ENCODE measurements at regions of chr1 and their contacts with region 1.

Region 1: GRCh38 chr1:20151906-20152598 is 12.9 kb downstream of the PLA2G2F start:
- DNase-seq: peak; percentile 74
- ATAC-seq: peak; percentile 98
- H3K4me3 Mint-ChIP-seq: peak overlapping the region; percentile 80
- H3K27ac Mint-ChIP-seq: no peak overlapping the region
- H3K4me1 Mint-ChIP-seq: peaks cover 9% of the 10 kb centered on the region
- H3K27me3 Mint-ChIP-seq: no peaks in the 10 kb centered on the region
- CTCF ChIP-seq: peak; percentile 65

Region 2: DNA sequence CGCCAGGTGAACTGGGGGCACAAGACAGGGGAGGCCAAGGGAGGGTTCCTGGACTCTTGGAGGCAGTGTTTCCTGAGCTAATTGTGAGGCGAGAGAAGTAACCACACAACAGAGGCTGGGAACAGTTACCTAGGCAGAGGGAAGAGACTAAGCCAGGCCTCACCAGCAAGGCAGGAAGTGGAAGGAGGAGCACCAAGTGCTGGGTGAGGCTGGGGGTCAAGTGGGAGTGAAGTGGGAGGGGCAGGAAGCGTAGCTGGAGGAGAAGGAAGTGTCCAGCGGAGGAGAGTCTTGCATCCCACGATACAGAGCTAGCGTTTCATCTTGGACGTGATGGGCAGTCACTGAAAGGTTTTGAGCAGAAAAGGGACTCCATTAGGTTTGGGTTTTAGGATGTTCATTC is 618.4 kb before region 1 on chr1:
- CTCF ChIA-PET with region 1: no interaction called
- POLR2A ChIA-PET with region 1: no interaction called
- intact Hi-C with region 1: no loop called
- DNase-seq: no peak
- ATAC-seq: no peak
- H3K4me3 Mint-ChIP-seq: no peak overlapping the region
- H3K27ac Mint-ChIP-seq: no peak overlapping the region
- H3K4me1 Mint-ChIP-seq: no peaks in the 10 kb centered on the region
- H3K27me3 Mint-ChIP-seq: no peaks in the 10 kb centered on the region
- CTCF ChIP-seq: no peak

Region 3: GRCh38 chr1:19882111-19883071 is 269.7 kb before region 1 on chr1 and contains the start of gene OTUD3:
- CTCF ChIA-PET with region 1: no interaction called
- POLR2A ChIA-PET with region 1: no interaction called
- intact Hi-C with region 1: loop called (anchors 1 kb)
- DNase-seq: peak; percentile 90
- ATAC-seq: peak; percentile 96
- H3K4me3 Mint-ChIP-seq: peak within 1 kb of the TSS; percentile 87
- H3K27ac Mint-ChIP-seq: peak within 1 kb of the TSS; percentile 84
- H3K4me1 Mint-ChIP-seq: peaks cover 30% of the 10 kb centered on the region
- H3K27me3 Mint-ChIP-seq: peaks cover 5% of the 10 kb centered on the region
- CTCF ChIP-seq: peak; percentile 64
- total RNA-seq, gene OTUD3: 13.2 and 14.2 TPM in 2 replicates

Region 4: GRCh38 chr1:19974822-19975416 is 177.1 kb before region 1 on chr1:
- CTCF ChIA-PET with region 1: interaction called, 33 read pairs
- POLR2A ChIA-PET with region 1: interaction called, 5 read pairs
- intact Hi-C with region 1: loop called (anchors 1 kb)
- DNase-seq: no peak
- ATAC-seq: peak; percentile 50
- H3K4me3 Mint-ChIP-seq: no peak overlapping the region
- H3K27ac Mint-ChIP-seq: no peak overlapping the region
- H3K4me1 Mint-ChIP-seq: peaks cover 3% of the 10 kb centered on the region
- H3K27me3 Mint-ChIP-seq: peaks cover 16% of the 10 kb centered on the region
- CTCF ChIP-seq: no peak

Region 5: GRCh38 chr1:20100632-20101355 is 51.3 kb before region 1 on chr1:
- CTCF ChIA-PET with region 1: interaction called, 54 read pairs
- POLR2A ChIA-PET with region 1: no interaction called
- intact Hi-C with region 1: loop called (anchors 1 kb)
- DNase-seq: peak; percentile 29
- ATAC-seq: peak; percentile 92
- H3K4me3 Mint-ChIP-seq: no peak overlapping the region
- H3K27ac Mint-ChIP-seq: no peak overlapping the region
- H3K4me1 Mint-ChIP-seq: peaks cover 6% of the 10 kb centered on the region
- H3K27me3 Mint-ChIP-seq: no peaks in the 10 kb centered on the region
- CTCF ChIP-seq: no peak

Region 6: DNA sequence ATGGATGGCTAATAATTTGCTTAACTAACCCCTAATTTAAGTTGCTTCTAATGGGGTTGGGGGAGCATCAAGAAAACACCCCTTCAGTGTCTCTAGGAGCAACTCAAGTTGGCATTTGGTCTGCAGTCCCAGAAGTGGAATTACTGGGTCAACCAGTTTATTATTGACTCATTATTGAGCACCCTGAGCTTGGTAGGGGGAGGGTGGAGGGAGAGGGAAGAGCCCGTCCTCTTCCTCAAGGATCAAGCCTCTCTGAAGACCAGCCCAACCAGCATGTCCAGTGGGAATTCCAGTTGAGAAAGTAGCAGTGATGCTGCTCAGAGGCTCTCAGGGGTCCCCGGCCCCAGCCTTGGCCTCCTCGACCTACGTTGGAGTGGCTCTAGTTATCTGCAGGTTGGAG is 15.0 kb before region 1 on chr1:
- CTCF ChIA-PET with region 1: no interaction called
- POLR2A ChIA-PET with region 1: no interaction called
- intact Hi-C with region 1: no loop called
- DNase-seq: no peak
- ATAC-seq: no peak
- H3K4me3 Mint-ChIP-seq: no peak overlapping the region
- H3K27ac Mint-ChIP-seq: no peak overlapping the region
- H3K4me1 Mint-ChIP-seq: no peaks in the 10 kb centered on the region
- H3K27me3 Mint-ChIP-seq: peaks cover 6% of the 10 kb centered on the region
- CTCF ChIP-seq: no peak

Region 7: DNA sequence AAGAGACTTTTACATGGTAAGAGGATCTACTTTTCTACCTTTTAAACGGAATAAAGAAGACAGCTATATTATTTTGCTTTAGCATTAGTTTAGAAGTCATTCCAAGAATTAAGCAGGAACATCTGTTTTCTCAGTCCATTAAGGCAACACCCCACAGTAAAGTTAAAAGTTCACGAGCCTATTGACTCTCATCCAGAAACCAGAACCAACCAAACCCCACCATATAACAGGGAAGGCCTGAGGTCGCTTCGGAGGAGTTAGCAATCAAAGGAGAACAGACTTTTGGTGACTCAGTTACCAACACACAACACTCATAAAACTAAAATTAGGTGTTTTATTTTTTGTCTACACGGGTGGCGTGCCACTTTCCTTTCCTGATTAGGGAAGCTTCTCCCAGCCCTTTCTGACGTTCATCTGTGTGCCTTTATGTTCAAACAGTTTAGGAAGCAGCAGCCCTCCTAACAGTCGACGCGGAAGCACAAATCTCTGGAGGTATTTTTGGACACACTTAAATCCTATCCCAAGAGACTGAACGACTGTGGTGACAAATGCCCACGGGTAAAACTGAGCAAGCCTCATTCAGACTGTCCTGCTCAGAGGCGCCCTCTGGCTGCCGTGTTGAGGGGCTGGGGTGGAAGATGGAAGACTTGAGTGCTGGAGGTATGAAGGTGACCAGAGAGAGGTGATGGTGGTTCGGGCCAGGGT is 42.9 kb after region 1 on chr1:
- CTCF ChIA-PET with region 1: interaction called, 14 read pairs
- POLR2A ChIA-PET with region 1: no interaction called
- intact Hi-C with region 1: loop called (anchors 1 kb)
- DNase-seq: peak; percentile 54
- ATAC-seq: peak; percentile 87
- H3K4me3 Mint-ChIP-seq: no peak overlapping the region
- H3K27ac Mint-ChIP-seq: no peak overlapping the region
- H3K4me1 Mint-ChIP-seq: peaks cover 7% of the 10 kb centered on the region
- H3K27me3 Mint-ChIP-seq: peaks cover 34% of the 10 kb centered on the region
- CTCF ChIP-seq: peak; percentile 56

Region 8: DNA sequence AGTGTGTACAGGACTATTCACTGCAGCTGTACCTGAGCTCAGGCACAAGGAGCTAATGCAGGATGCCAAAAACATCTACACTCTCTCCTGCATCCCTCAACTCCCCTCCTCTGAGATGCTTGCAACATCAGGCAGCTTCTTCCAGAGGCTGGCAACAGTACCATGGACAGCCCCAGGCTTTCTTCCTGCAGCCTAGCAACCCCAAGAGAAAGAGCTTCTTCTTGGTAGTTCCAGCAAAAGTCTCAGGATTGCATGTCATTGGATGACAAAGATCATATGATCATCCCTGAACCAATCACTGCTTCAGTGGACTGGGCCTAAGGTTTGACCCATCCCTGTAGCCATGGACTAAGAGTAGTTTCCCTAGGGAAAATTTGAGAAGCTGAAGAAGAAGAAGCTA is 287.2 kb after region 1 on chr1:
- CTCF ChIA-PET with region 1: no interaction called
- POLR2A ChIA-PET with region 1: no interaction called
- intact Hi-C with region 1: no loop called
- DNase-seq: no peak
- ATAC-seq: no peak
- H3K4me3 Mint-ChIP-seq: no peak overlapping the region
- H3K27ac Mint-ChIP-seq: no peak overlapping the region
- H3K4me1 Mint-ChIP-seq: peaks cover 2% of the 10 kb centered on the region
- H3K27me3 Mint-ChIP-seq: peaks cover 17% of the 10 kb centered on the region
- CTCF ChIP-seq: no peak

Measured in activated B cell treated with CpG ODN at 0.5 μM for 24 hours (primary cell).